Naive thymus-derived CD4-positive, alpha-beta T cell (primary cell): ENCODE measurements at regions of chr10 and their contacts with region 1.

Region 1: GRCh38 chr10:33008499-33009243 is 50.6 kb upstream of the ITGB1 start:
- DNase-seq: peak in 8 of 9 donors; percentile 25 to 65 (median 48)
- ATAC-seq: peak; percentile 50
- H3K4me3 ChIP-seq: peak overlapping the region; percentile 36
- H3K4me3 Mint-ChIP-seq: peak overlapping the region in 9 of 10 donors; percentile 56 to 79 (median 70)
- H3K27ac ChIP-seq: no peak overlapping the region
- H3K27ac Mint-ChIP-seq: peak overlapping the region in 5 of 9 donors; percentile 16 to 56 (median 26)
- H3K4me1 ChIP-seq: peaks cover 6 to 42% of the 10 kb centered on the region in 2 donors
- H3K4me1 Mint-ChIP-seq: peaks cover 17 to 39% (median 33%) of the 10 kb centered on the region in 7 donors
- H3K27me3 ChIP-seq: no peaks in the 10 kb centered on the region
- H3K27me3 Mint-ChIP-seq: peaks cover 0 to 9% (median 0%) of the 10 kb centered on the region in 5 donors

Region 2: DNA sequence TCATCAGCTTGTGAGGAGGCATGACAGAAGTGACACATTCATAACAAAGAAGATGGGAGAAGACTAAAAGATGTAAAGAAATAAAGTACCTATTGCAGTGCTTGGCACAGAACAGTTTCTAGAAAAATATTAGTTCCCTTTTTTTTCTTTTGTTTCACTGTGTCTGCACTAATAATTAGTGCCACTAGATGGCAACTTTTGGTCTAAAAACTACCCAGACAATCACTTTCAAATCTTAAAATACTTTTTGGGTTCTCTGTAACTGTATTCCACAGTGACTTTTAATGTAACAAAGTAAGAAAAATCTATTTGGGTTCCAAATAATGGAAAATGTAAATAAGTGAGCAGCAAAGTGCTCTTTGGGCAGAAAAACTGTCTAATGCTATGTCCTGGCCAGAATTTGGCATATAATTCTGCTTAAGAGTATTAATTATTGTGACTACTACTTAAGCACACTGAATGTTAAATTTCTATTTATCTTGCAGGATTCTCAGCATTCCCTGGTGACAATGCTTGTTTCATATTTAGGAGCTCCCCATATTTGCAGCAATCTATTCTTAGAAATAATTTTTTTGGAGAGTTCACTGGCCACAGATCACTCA is 817.7 kb before region 1 on chr10:
- CTCF ChIA-PET with region 1: interaction called, 3 read pairs
- POLR2A ChIA-PET with region 1: no interaction called
- intact Hi-C with region 1: loop called (anchors 1 to 10 kb)
- DNase-seq: peak in 6 of 9 donors; percentile 17 to 49 (median 42)
- ATAC-seq: peak; percentile 70
- H3K4me3 ChIP-seq: no peak overlapping the region
- H3K4me3 Mint-ChIP-seq: no peak overlapping the region
- H3K27ac ChIP-seq: no peak overlapping the region
- H3K27ac Mint-ChIP-seq: peak overlapping the region in 1 of 9 donors; percentile 3
- H3K4me1 ChIP-seq: no peaks in the 10 kb centered on the region
- H3K4me1 Mint-ChIP-seq: peaks cover 0 to 5% (median 4%) of the 10 kb centered on the region in 7 donors
- H3K27me3 ChIP-seq: no peaks in the 10 kb centered on the region
- H3K27me3 Mint-ChIP-seq: peaks cover 0 to 9% (median 0%) of the 10 kb centered on the region in 5 donors

Region 3: DNA sequence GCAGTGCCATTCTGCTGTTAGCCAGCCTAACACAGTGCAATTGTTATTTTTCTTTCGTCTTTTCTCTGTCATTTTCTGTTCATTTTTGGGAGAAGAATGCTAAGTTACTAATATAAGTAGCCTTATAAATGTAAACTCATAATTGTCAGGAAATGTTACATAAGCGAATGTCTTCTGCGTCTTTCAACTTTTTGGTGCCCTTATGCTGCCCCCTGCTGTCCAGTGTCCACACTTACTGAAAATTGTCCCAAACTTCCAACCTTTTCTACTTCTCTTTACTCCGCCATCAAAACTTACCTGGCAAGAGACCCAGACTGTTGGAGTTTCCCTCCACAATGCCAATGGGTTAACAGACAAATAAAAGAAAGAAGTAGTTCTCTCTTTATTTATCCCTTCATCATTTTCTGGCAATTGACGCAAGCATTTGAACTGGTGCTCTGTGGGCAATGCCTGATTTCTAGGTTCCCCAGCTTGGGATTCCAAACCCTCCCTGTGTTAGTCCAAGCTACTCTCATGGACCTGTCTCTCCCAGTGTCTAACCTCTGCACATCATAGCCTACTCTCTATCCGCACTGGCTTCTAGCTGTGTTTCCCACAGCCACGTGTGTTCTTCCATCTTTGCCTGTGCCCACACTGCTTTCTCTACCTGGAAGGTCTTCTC is 640.7 kb before region 1 on chr10:
- CTCF ChIA-PET with region 1: interaction called, 5 read pairs
- POLR2A ChIA-PET with region 1: no interaction called
- intact Hi-C with region 1: loop called (anchors 1 kb)
- DNase-seq: peak; percentile 44 to 79 (median 73)
- ATAC-seq: peak; percentile 92
- H3K4me3 ChIP-seq: no peak overlapping the region
- H3K4me3 Mint-ChIP-seq: peak overlapping the region; percentile 11 to 85 (median 64)
- H3K27ac ChIP-seq: peak overlapping the region; percentile 41
- H3K27ac Mint-ChIP-seq: peak overlapping the region; percentile 26 to 92 (median 75)
- H3K4me1 ChIP-seq: peaks cover 9 to 33% of the 10 kb centered on the region in 2 donors
- H3K4me1 Mint-ChIP-seq: peaks cover 29 to 91% (median 70%) of the 10 kb centered on the region in 7 donors
- H3K27me3 ChIP-seq: no peaks in the 10 kb centered on the region
- H3K27me3 Mint-ChIP-seq: no peaks in the 10 kb centered on the region

Region 4: GRCh38 chr10:32795598-32796183 is 213.0 kb before region 1 on chr10:
- CTCF ChIA-PET with region 1: interaction called, 8 read pairs
- POLR2A ChIA-PET with region 1: no interaction called
- intact Hi-C with region 1: loop called (anchors 1 kb)
- DNase-seq: peak in 5 of 9 donors; percentile 12 to 37 (median 22)
- ATAC-seq: peak; percentile 54
- H3K4me3 ChIP-seq: no peak overlapping the region
- H3K4me3 Mint-ChIP-seq: no peak overlapping the region
- H3K27ac ChIP-seq: no peak overlapping the region
- H3K27ac Mint-ChIP-seq: no peak overlapping the region
- H3K4me1 ChIP-seq: peaks cover 0 to 4% of the 10 kb centered on the region in 2 donors
- H3K4me1 Mint-ChIP-seq: no peaks in the 10 kb centered on the region
- H3K27me3 ChIP-seq: no peaks in the 10 kb centered on the region
- H3K27me3 Mint-ChIP-seq: peaks cover 0 to 3% (median 0%) of the 10 kb centered on the region in 5 donors

Region 5: GRCh38 chr10:32865170-32865569 is 143.5 kb before region 1 on chr10:
- CTCF ChIA-PET with region 1: no interaction called
- POLR2A ChIA-PET with region 1: no interaction called
- intact Hi-C with region 1: no loop called
- DNase-seq: no peak
- ATAC-seq: no peak
- H3K4me3 ChIP-seq: no peak overlapping the region
- H3K4me3 Mint-ChIP-seq: no peak overlapping the region
- H3K27ac ChIP-seq: no peak overlapping the region
- H3K27ac Mint-ChIP-seq: no peak overlapping the region
- H3K4me1 ChIP-seq: no peaks in the 10 kb centered on the region
- H3K4me1 Mint-ChIP-seq: no peaks in the 10 kb centered on the region
- H3K27me3 ChIP-seq: no peaks in the 10 kb centered on the region
- H3K27me3 Mint-ChIP-seq: no peaks in the 10 kb centered on the region

Region 6: DNA sequence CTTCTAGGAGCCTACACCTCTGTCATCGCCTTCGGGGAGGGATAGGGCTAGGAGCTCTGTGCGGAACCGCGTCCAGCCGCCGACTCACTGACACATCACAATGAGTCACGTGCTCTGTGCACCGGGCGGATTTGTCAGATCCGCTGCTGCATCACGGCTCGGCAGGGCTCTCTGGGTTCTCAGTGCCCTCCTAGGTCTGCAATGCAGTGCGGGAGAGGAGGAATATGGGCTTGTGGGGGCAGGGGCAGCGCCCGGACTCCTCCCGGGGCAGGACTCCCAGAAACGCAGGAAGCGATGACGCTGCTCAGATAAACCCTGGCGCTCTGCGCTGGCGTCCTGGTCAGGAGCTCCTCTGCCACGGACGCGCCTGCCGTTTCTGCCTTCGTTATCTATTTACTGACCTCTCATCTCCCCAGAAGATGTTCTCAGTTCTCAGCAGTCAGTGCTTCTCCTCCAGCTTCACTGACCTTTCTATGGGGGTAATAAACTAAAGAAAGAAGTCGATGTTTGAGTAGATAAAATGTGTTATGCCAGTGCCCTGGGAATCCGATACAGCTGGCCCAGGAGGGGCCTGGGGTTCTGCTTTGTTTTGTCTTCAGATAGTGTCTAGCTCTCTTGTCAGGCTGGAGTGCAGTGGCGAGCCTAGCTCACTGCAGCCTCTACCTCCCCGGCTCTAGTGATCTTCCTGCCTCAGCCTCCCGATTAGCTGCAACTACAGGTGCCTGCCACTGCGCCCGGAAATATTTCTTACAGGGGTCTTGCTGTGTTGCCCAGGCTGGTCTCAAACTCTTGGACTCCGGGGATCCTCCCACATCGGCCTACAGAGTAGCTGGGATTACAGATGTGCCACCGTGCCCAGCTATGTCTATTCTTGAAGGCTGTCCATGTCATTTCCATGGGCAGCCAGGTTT is 27.9 kb before region 1 on chr10:
- CTCF ChIA-PET with region 1: interaction called, 3 read pairs
- POLR2A ChIA-PET with region 1: interaction called, 3 read pairs
- intact Hi-C with region 1: loop called (anchors 1 to 2 kb)
- DNase-seq: peak; percentile 54 to 84 (median 66)
- ATAC-seq: peak; percentile 95
- H3K4me3 ChIP-seq: peak overlapping the region; percentile 64
- H3K4me3 Mint-ChIP-seq: peak overlapping the region; percentile 90 to 99 (median 95)
- H3K27ac ChIP-seq: peak overlapping the region; percentile 56
- H3K27ac Mint-ChIP-seq: peak overlapping the region; percentile 82 to 99 (median 93)
- H3K4me1 ChIP-seq: peaks cover 11 to 32% of the 10 kb centered on the region in 2 donors
- H3K4me1 Mint-ChIP-seq: peaks cover 15 to 33% (median 24%) of the 10 kb centered on the region in 7 donors
- H3K27me3 ChIP-seq: no peaks in the 10 kb centered on the region
- H3K27me3 Mint-ChIP-seq: peaks cover 0 to 5% (median 0%) of the 10 kb centered on the region in 5 donors

Region 7: DNA sequence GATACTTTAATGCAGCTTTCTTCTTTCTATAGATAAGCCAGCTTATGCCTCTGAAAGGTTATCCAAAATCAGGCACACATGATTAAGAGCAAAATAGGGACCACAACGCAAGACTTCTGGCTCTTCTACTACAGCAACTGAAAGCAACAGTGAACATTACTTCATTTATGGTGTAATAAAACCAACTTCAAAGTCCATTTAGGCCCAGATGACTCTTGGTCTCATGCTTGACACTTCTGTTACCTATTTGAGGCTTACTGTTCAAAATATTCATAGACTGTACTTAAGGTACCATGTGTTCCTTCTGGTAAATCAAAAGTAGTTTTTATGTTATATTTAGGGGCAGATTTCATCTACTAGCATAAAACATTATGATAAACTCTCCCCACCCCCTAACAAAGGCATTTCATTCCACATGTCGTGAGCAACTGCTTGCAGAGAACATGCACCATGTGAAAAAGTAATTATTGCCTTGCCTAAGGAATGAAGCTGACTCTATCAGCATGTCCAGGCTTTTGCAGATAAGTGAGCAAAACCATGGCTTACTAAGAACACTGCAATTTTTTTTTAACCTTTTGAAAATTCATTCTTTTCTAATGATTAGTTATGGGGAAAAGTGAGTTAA is 104.3 kb after region 1 on chr10:
- CTCF ChIA-PET with region 1: no interaction called
- POLR2A ChIA-PET with region 1: no interaction called
- intact Hi-C with region 1: no loop called
- DNase-seq: no peak
- ATAC-seq: no peak
- H3K4me3 ChIP-seq: no peak overlapping the region
- H3K4me3 Mint-ChIP-seq: no peak overlapping the region
- H3K27ac ChIP-seq: no peak overlapping the region
- H3K27ac Mint-ChIP-seq: peak overlapping the region in 1 of 9 donors; percentile 2
- H3K4me1 ChIP-seq: peaks cover 5 to 95% of the 10 kb centered on the region in 2 donors
- H3K4me1 Mint-ChIP-seq: peaks cover 21 to 69% (median 31%) of the 10 kb centered on the region in 7 donors
- H3K27me3 ChIP-seq: no peaks in the 10 kb centered on the region
- H3K27me3 Mint-ChIP-seq: no peaks in the 10 kb centered on the region

Region 8: GRCh38 chr10:33155720-33156638 is 147.3 kb after region 1 on chr10:
- CTCF ChIA-PET with region 1: interaction called, 7 read pairs
- POLR2A ChIA-PET with region 1: interaction called, 3 read pairs
- intact Hi-C with region 1: loop called (anchors 1 to 2 kb)
- DNase-seq: peak in 7 of 9 donors; percentile 28 to 65 (median 55)
- ATAC-seq: peak; percentile 85
- H3K4me3 ChIP-seq: no peak overlapping the region
- H3K4me3 Mint-ChIP-seq: no peak overlapping the region
- H3K27ac ChIP-seq: no peak overlapping the region
- H3K27ac Mint-ChIP-seq: peak overlapping the region in 8 of 9 donors; percentile 0 to 88 (median 41)
- H3K4me1 ChIP-seq: peaks cover 15 to 44% of the 10 kb centered on the region in 2 donors
- H3K4me1 Mint-ChIP-seq: peaks cover 8 to 41% (median 35%) of the 10 kb centered on the region in 7 donors
- H3K27me3 ChIP-seq: no peaks in the 10 kb centered on the region
- H3K27me3 Mint-ChIP-seq: no peaks in the 10 kb centered on the region

Region 9: DNA sequence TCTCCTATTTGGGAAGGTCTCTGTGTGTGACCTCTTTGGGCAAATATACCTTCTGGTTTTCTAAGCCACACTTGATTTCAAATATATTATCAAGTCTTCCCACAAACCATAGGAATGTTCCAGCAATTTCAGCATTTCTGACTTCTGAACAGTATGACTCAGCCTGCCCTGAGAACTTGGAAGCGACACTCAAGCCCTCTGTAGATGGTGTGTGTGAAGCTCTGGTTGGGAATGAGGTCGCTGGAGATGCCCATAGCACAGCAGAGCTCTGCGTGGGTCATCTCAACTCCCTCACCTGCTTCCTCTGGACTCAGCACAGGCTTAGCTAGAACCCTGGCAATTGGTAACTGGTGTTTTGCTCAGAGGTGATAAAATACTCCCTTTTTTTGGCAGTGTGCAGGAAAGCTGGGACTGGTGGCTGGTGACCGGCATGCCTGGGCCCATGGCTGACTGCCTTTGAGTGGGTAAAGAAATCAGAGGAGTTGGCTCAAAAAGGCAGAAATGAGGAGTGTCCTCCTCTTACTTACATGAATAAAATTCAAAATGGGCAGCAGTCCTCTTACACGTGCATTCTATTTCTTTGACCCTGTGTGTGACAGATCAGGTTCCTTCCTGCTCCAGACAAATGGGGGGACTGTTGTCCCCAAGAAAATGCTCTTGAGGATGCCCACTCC is 413.3 kb after region 1 on chr10:
- CTCF ChIA-PET with region 1: no interaction called
- POLR2A ChIA-PET with region 1: no interaction called
- intact Hi-C with region 1: no loop called
- DNase-seq: no peak
- ATAC-seq: no peak
- H3K4me3 ChIP-seq: no peak overlapping the region
- H3K4me3 Mint-ChIP-seq: no peak overlapping the region
- H3K27ac ChIP-seq: no peak overlapping the region
- H3K27ac Mint-ChIP-seq: no peak overlapping the region
- H3K4me1 ChIP-seq: no peaks in the 10 kb centered on the region
- H3K4me1 Mint-ChIP-seq: peaks cover 0 to 2% (median 0%) of the 10 kb centered on the region in 7 donors
- H3K27me3 ChIP-seq: no peaks in the 10 kb centered on the region
- H3K27me3 Mint-ChIP-seq: peaks cover 16 to 22% (median 17%) of the 10 kb centered on the region in 5 donors